A673 (cell line): ENCODE measurements at regions of chr9 and their contacts with region 1.

Region 1: GRCh38 chr9:89008744-89009545 is 17.7 kb downstream of the S1PR3 start:
- DNase-seq: peak; percentile 77
- H3K4me3 ChIP-seq: no peak overlapping the region
- H3K27ac ChIP-seq: peak overlapping the region; percentile 33
- H3K4me1 ChIP-seq: peaks cover 43% of the 10 kb centered on the region
- H3K27me3 ChIP-seq: no peaks in the 10 kb centered on the region
- CTCF ChIP-seq: peak; percentile 54

Region 2: GRCh38 chr9:87968155-87968554 is 1040.8 kb before region 1 on chr9:
- CTCF ChIA-PET with region 1: no interaction called
- POLR2A ChIA-PET with region 1: no interaction called
- intact Hi-C with region 1: loop called (anchors 5 kb)
- DNase-seq: no peak
- H3K4me3 ChIP-seq: no peak overlapping the region
- H3K27ac ChIP-seq: no peak overlapping the region
- H3K4me1 ChIP-seq: no peaks in the 10 kb centered on the region
- H3K27me3 ChIP-seq: no peaks in the 10 kb centered on the region
- CTCF ChIP-seq: no peak

Region 3: GRCh38 chr9:89077519-89077918 is 68.6 kb after region 1 on chr9:
- CTCF ChIA-PET with region 1: no interaction called
- POLR2A ChIA-PET with region 1: no interaction called
- intact Hi-C with region 1: loop called (anchors 10 kb)
- DNase-seq: no peak
- H3K4me3 ChIP-seq: no peak overlapping the region
- H3K27ac ChIP-seq: no peak overlapping the region
- H3K4me1 ChIP-seq: no peaks in the 10 kb centered on the region
- H3K27me3 ChIP-seq: no peaks in the 10 kb centered on the region
- CTCF ChIP-seq: no peak